ENCODE measurements at regions of chr11 and their contacts with region 1.

Region 1: GRCh38 chr11:104609311-104610085 is 288.8 kb downstream of the CASP12 start:
- DNase-seq: peak; percentile 24
- H3K4me3 Mint-ChIP-seq: no peak overlapping the region
- H3K27ac Mint-ChIP-seq: no peak overlapping the region
- H3K4me1 Mint-ChIP-seq: peaks cover 27% of the 10 kb centered on the region
- H3K27me3 Mint-ChIP-seq: peaks cover 7% of the 10 kb centered on the region

Region 2: DNA sequence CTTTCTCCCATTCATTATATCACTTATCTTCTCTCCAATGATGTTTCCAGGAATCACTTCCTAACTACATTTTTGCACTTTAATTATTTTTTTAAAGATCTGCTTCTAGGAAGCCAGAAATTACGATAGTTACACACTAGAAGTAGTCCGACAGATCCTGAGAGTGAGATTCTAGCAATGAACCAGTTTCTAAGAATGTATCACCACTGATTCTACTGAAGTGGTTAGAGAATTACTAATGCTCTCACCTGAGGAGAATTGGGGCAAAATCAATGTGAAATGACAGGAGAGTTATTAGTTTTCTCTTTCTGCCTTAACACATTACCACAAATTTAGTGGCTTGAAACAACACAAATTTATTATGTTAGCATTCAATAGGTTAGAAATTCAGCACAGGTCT is 47.6 kb after region 1 on chr11:
- intact Hi-C with region 1: loop called (anchors 2 kb)
- DNase-seq: no peak
- H3K4me3 Mint-ChIP-seq: peak overlapping the region; percentile 11
- H3K27ac Mint-ChIP-seq: no peak overlapping the region
- H3K4me1 Mint-ChIP-seq: peaks cover 33% of the 10 kb centered on the region
- H3K27me3 Mint-ChIP-seq: no peaks in the 10 kb centered on the region

Region 3: GRCh38 chr11:104799251-104799650 is 189.8 kb after region 1 on chr11:
- intact Hi-C with region 1: loop called (anchors 5 kb)
- DNase-seq: no peak
- H3K4me3 Mint-ChIP-seq: peak overlapping the region; percentile 78
- H3K27ac Mint-ChIP-seq: peak overlapping the region; percentile 73
- H3K4me1 Mint-ChIP-seq: peaks cover 35% of the 10 kb centered on the region
- H3K27me3 Mint-ChIP-seq: no peaks in the 10 kb centered on the region

Region 4: DNA sequence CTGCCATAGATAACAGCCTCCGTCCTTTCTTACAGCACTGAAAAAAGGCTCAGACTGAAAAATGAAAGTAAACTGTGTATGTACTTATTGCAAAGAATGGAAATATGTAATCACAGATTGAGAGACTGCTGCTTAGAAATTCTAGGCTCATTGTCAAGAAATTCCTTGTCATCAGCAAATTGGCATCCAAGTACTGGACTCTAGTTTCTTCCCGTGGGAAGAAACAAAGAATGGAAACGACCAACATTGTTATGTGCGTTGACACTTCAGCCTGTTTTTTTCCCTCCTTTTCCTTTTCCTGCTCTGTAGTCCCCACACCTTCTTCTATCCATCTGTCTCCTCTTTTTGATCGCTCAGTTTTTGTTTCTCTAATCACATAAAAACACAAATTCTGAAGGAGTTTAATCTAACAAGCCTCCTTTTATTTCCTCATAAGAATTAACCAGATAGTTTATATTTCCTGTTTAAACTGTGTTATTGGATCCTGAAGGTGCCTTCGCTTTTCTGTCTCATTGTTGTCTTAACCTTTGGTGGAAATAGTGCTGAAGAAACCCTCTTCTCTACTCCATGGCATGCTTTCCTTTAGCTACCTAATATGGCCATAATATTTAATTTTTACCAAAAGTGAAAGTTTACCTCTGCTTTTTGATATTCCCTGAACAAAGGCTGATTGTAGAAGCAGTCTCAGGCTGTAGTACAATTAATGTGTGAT is 308.8 kb after region 1 on chr11:
- intact Hi-C with region 1: loop called (anchors 5 kb)
- DNase-seq: no peak
- H3K4me3 Mint-ChIP-seq: peak overlapping the region; percentile 71
- H3K27ac Mint-ChIP-seq: peak overlapping the region; percentile 30
- H3K4me1 Mint-ChIP-seq: peaks cover 31% of the 10 kb centered on the region
- H3K27me3 Mint-ChIP-seq: peaks cover 3% of the 10 kb centered on the region

Region 5: GRCh38 chr11:105000797-105001196 is 391.3 kb after region 1 on chr11:
- intact Hi-C with region 1: loop called (anchors 1 kb)
- DNase-seq: peak; percentile 17
- H3K4me3 Mint-ChIP-seq: no peak overlapping the region
- H3K27ac Mint-ChIP-seq: no peak overlapping the region
- H3K4me1 Mint-ChIP-seq: peaks cover 6% of the 10 kb centered on the region
- H3K27me3 Mint-ChIP-seq: peaks cover 4% of the 10 kb centered on the region

Measured in activated T-helper 1 cell treated with anti-CD3 and anti-CD28 coated beads, Interleukin-12 subunit alpha, Interleukin-12 subunit beta, Interleukin-2, Interleukin-4 antibody, amounts not matched to agents 30 ng/mL and 10 ng/mL and 1 ng/mL, durations not matched to agents 14 hours and 24 hours and 36 hours (primary cell).